ENCODE measurements at regions of chr14 and their contacts with region 1.

Region 1: GRCh38 chr14:104768437-104769323 is 15.7 kb downstream of the SIVA1 start:
- H3K4me3 ChIP-seq: no peak overlapping the region
- H3K27ac ChIP-seq: 0 out of 2 replicates have a peak overlapping the region, but pooled peaks have one; percentile 16
- H3K4me1 ChIP-seq: peaks cover 4% of the 10 kb centered on the region; the same call in 1 of the 2 replicates
- CTCF ChIP-seq: peak; percentile 83

Region 2: DNA sequence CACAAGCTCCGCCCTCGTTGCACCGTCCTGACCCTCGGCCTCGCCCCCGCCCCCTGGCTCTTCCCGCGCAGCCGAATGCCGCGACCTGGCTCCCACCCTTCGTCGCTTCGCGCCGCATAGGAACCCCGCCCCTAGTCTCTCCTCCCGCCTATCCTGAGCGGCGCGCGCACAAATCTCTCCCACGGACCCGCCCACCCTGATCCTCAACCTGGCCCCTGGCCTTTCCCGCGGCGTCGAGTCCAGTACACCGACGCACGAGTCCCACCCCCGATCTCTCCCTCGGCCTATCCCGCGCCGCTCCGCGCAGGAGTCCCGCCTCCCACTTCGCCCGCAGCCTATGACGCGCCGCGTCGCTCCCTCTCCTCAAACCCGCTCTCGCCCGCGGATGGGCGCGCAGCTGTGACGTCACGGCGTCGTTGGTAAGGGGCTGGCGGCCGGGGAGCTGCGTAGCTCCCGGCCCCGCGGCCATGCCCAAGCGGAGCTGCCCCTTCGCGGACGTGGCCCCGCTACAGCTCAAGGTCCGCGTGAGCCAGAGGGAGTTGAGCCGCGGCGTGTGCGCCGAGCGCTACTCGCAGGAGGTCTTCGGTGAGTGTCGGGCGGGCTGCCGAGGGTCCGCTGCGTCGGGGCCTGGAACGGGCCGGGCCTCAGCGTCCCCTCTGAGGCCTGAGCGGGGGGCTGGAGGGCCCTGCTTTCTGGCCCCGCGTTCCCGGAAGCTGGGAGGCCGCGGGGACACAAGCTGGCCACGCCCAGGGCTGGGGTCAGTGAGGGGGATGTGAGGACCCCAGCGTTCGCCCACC is 15.7 kb before region 1 on chr14 and contains the start of gene SIVA1:
- CTCF ChIA-PET with region 1: interaction called, 15 read pairs
- POLR2A ChIA-PET with region 1: interaction called, 14 read pairs
- H3K4me3 ChIP-seq: peak within 1 kb of the TSS; percentile 100
- H3K27ac ChIP-seq: peak within 1 kb of the TSS; percentile 92
- H3K4me1 ChIP-seq: no peaks in the 10 kb centered on the region; the same call in 1 of the 2 replicates
- CTCF ChIP-seq: no peak

Region 3: DNA sequence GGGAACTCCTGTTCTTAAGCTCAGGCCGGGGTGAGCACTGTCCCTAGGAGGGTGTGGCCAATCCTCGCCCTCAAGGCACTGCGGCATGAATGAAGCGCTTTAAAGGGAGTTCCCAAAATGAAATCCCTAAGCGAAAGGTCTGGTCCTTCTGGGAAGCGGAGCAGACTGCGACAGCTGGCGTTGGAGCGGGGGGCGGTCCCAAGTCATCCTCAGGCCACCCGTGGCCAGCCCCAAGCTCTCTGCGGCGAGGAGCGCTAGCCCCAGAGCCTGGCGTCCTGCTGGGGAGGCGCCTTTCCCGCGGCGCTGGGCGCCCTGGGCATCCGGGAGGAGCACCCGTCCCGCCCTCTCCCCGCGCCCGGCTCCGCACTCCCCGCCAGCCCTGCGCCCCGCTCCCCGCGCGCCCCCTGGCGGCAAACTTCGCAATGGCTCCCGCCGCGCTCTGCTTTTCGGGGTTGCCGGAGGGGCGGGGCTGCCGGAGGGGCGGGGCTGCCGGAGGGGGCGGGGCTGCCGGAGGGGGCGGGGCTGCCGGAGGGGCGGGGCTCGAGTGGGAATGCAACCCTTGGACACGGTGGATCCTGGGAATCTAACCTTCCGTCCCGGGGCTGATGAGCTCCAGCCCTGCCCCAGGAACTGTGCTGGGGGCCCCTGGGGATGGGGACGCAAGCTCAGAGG is 57.6 kb after region 1 on chr14:
- CTCF ChIA-PET with region 1: interaction called, 57 read pairs
- POLR2A ChIA-PET with region 1: interaction called, 13 read pairs
- H3K4me3 ChIP-seq: peak overlapping the region; percentile 49
- H3K27ac ChIP-seq: no peak overlapping the region
- H3K4me1 ChIP-seq: peaks cover 6% of the 10 kb centered on the region
- CTCF ChIP-seq: peak; percentile 55

Region 4: GRCh38 chr14:104870420-104871144 is 101.9 kb after region 1 on chr14:
- CTCF ChIA-PET with region 1: interaction called, 14 read pairs
- POLR2A ChIA-PET with region 1: interaction called, 4 read pairs
- H3K4me3 ChIP-seq: no peak overlapping the region
- H3K27ac ChIP-seq: no peak overlapping the region
- H3K4me1 ChIP-seq: 0 out of 2 replicates have a peak, but pooled peaks cover 4% of the 10 kb centered on the region
- CTCF ChIP-seq: peak; percentile 36; the same call in 1 of the 2 replicates

Region 5: GRCh38 chr14:104967386-104968152 is 198.9 kb after region 1 on chr14:
- CTCF ChIA-PET with region 1: no interaction called
- POLR2A ChIA-PET with region 1: no interaction called
- H3K4me3 ChIP-seq: no peak overlapping the region
- H3K27ac ChIP-seq: no peak overlapping the region
- H3K4me1 ChIP-seq: peaks cover 9% of the 10 kb centered on the region
- CTCF ChIP-seq: no peak